IMR-90 (cell line): ENCODE measurements at regions of chr7 and their contacts with region 1.

Region 1: GRCh38 chr7:124856299-124856888 is 73.2 kb downstream of the POT1 start:
- DNase-seq: peak; percentile 61
- ATAC-seq: peak; percentile 79
- H3K4me3 ChIP-seq: no peak overlapping the region
- H3K27ac ChIP-seq: no peak overlapping the region
- H3K4me1 ChIP-seq: no peaks in the 10 kb centered on the region
- H3K27me3 ChIP-seq: no peaks in the 10 kb centered on the region
- CTCF ChIP-seq: peak; percentile 71
- POLR2A ChIP-seq: no peak
- RAD21 ChIP-seq: peak; percentile 69

Region 2: GRCh38 chr7:123797673-123798527 is 1058.5 kb before region 1 on chr7:
- CTCF ChIA-PET with region 1: no interaction called
- POLR2A ChIA-PET with region 1: no interaction called
- dilution Hi-C with region 1: no loop called
- in situ Hi-C with region 1: no loop called
- intact Hi-C with region 1: loop called (anchors 10 kb)
- DNase-seq: peak; percentile 78
- ATAC-seq: peak; percentile 77
- H3K4me3 ChIP-seq: no peak overlapping the region
- H3K27ac ChIP-seq: no peak overlapping the region
- H3K4me1 ChIP-seq: peaks cover 2% of the 10 kb centered on the region; the same call in 1 of the 2 replicates
- H3K27me3 ChIP-seq: 0 out of 2 replicates have a peak, but pooled peaks cover under 1% of the 10 kb centered on the region
- CTCF ChIP-seq: peak; percentile 61
- POLR2A ChIP-seq: no peak
- RAD21 ChIP-seq: peak; percentile 61

Region 3: GRCh38 chr7:123871998-123872867 is 984.2 kb before region 1 on chr7:
- CTCF ChIA-PET with region 1: no interaction called
- POLR2A ChIA-PET with region 1: no interaction called
- dilution Hi-C with region 1: no loop called
- in situ Hi-C with region 1: no loop called
- intact Hi-C with region 1: loop called (anchors 10 kb)
- DNase-seq: peak; percentile 42
- ATAC-seq: peak; percentile 81
- H3K4me3 ChIP-seq: no peak overlapping the region
- H3K27ac ChIP-seq: no peak overlapping the region
- H3K4me1 ChIP-seq: no peaks in the 10 kb centered on the region
- H3K27me3 ChIP-seq: no peaks in the 10 kb centered on the region
- CTCF ChIP-seq: peak; percentile 53
- POLR2A ChIP-seq: no peak
- RAD21 ChIP-seq: peak; percentile 68

Region 4: GRCh38 chr7:124101173-124101768 is 755.1 kb before region 1 on chr7:
- CTCF ChIA-PET with region 1: interaction called, 3 read pairs
- POLR2A ChIA-PET with region 1: no interaction called
- dilution Hi-C with region 1: no loop called
- in situ Hi-C with region 1: no loop called
- intact Hi-C with region 1: loop called (anchors 5 kb)
- DNase-seq: peak; percentile 10
- ATAC-seq: no peak
- H3K4me3 ChIP-seq: no peak overlapping the region
- H3K27ac ChIP-seq: no peak overlapping the region
- H3K4me1 ChIP-seq: no peaks in the 10 kb centered on the region
- H3K27me3 ChIP-seq: no peaks in the 10 kb centered on the region
- CTCF ChIP-seq: peak; percentile 47
- POLR2A ChIP-seq: no peak
- RAD21 ChIP-seq: peak; percentile 56

Region 5: GRCh38 chr7:124152859-124153692 is 703.3 kb before region 1 on chr7:
- CTCF ChIA-PET with region 1: no interaction called
- POLR2A ChIA-PET with region 1: no interaction called
- dilution Hi-C with region 1: no loop called
- in situ Hi-C with region 1: no loop called
- intact Hi-C with region 1: loop called (anchors 1 kb)
- DNase-seq: peak; percentile 66
- ATAC-seq: peak; percentile 95
- H3K4me3 ChIP-seq: no peak overlapping the region
- H3K27ac ChIP-seq: no peak overlapping the region
- H3K4me1 ChIP-seq: no peaks in the 10 kb centered on the region
- H3K27me3 ChIP-seq: no peaks in the 10 kb centered on the region
- CTCF ChIP-seq: peak; percentile 38
- POLR2A ChIP-seq: no peak
- RAD21 ChIP-seq: no peak

Region 6: DNA sequence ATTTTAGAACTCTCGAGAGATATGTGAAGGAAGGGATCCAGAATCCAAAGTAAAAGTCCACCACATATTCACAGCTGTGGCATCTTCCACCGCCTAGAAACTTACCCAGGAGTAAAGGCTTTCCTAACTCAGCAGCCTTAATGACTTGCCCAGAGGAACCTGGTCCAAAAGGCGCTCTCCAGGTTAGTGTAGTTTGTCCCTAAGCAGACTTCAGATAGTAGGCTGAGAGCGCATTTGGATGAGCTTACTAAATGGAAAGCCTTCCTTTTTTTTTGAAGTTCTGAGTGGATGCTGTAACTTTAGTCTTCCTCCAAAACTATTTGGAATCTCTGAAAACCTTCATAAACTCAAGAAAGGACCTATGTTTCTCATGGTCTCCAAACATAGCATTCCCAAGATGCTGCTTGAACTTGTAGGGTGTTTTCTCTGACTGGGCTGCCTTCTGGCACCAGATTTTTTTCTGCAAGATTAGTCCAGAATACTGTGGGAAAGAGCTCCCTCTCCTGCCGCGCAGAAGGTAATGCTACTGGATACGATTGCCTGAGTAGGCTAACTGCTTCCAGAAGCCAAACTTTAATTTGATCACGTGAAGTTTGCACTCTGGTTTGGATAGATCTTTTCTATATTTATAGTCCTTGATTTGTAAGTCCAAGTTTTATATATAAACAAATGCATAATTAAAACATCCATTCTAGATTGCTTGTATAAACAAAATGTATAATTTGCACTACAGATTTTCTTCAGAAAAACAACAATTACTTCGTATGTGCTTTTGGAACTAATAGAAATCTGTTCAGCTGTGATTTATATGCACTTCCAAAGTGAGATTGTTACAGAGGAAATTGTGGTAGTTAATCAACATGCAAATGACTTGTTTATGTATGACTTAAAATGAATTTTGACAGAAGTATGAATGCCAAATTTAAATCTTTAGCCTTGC is 71.2 kb before region 1 on chr7:
- CTCF ChIA-PET with region 1: no interaction called
- POLR2A ChIA-PET with region 1: no interaction called
- dilution Hi-C with region 1: no loop called
- in situ Hi-C with region 1: no loop called
- intact Hi-C with region 1: loop called (anchors 5 kb)
- DNase-seq: peak; percentile 73
- ATAC-seq: peak; percentile 85
- H3K4me3 ChIP-seq: no peak overlapping the region
- H3K27ac ChIP-seq: no peak overlapping the region
- H3K4me1 ChIP-seq: peaks cover 2% of the 10 kb centered on the region; the same call in 1 of the 2 replicates
- H3K27me3 ChIP-seq: no peaks in the 10 kb centered on the region
- CTCF ChIP-seq: peak; percentile 95
- POLR2A ChIP-seq: 0 out of 2 replicates have a peak, but pooled peaks have one; percentile 43
- RAD21 ChIP-seq: peak; percentile 97

Region 7: DNA sequence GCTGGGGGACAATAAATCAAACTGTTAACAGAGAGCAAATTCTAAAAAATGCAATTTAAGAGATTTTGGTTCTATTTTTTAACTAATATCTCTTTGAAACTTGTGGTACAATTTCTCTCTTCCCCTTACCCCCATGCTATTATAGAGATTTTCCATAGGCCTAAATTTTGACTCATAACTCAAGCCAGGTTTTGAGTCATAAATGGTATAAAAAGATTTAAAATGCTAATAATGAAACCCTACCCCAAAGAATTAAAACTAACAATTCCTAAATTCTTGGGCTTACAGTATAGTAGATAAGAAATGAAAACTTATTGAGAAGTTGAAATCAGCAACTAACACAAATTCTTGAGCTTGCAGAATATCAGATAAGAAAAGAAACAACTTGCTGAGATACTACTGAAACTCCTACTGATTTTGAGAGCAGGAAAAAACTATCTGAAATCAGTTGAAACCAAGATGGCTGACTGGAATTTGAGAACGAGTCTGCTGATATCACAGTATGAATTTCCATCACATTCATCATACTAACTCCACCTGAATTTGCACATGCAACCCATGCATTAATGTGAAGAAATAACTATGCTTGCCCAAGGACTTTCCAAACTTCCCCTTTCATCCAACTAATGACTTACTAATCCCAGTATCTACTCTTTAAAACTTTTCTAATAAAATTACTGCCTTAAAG is 36.9 kb after region 1 on chr7:
- CTCF ChIA-PET with region 1: no interaction called
- POLR2A ChIA-PET with region 1: no interaction called
- dilution Hi-C with region 1: no loop called
- in situ Hi-C with region 1: no loop called
- intact Hi-C with region 1: no loop called
- DNase-seq: no peak
- ATAC-seq: no peak
- H3K4me3 ChIP-seq: no peak overlapping the region
- H3K27ac ChIP-seq: no peak overlapping the region
- H3K4me1 ChIP-seq: no peaks in the 10 kb centered on the region
- H3K27me3 ChIP-seq: no peaks in the 10 kb centered on the region
- CTCF ChIP-seq: no peak
- POLR2A ChIP-seq: no peak
- RAD21 ChIP-seq: no peak